ENCODE measurements at regions of chr6 and their contacts with region 1.

Region 1: DNA sequence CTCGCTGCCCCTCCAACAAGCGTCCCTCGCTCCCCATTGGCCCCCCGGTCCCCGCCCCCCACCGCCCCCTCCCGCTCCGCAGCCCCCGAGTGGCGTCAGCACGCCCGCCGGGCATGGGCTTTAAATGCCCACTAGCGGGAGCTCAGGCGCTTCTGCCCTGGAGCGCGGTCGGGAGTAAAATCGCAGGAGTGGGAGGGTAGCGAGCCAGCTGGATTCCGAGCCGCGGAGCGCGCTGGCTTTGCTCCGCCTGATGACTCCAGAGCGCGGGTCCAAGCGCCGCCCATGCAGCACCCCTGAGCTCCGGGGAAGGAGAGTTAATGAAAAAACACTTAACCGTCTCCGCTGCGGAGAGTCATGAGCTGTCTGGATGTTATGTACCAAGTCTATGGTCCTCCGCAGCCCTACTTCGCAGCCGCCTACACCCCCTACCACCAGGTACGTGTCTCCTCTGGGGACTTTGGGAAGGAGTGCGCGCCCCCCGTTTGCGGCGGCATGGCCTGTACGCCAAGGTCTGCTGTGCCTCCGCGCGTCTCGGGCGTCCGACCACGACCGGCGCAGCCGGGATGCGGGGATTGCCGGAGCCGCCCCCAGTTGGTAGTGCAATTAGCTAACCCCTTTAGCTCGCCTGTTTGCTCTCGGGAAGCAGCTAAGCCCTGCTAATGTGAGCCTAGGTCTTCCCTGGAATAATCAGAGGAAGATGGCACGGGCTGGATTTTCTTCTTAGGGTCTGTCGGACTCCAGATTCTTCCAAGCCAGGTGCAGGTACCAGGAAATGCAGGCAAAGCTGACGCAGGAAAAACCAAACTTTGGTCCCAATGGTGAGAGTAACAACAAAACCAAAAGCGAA is at the start of gene VGLL2:
- DNase-seq: peak; percentile 79 to 94
- ATAC-seq: peak; percentile 85 to 92 (median 88)
- H3K4me3 ChIP-seq: peak within 1 kb of the TSS; percentile 90
- H3K27ac ChIP-seq: peak within 1 kb of the TSS; percentile 95
- H3K4me1 ChIP-seq: peaks cover 23% of the 10 kb centered on the region
- H3K27me3 ChIP-seq: peaks cover 0 to 7% (median 3%) of the 10 kb centered on the region in 3 donors
- CTCF ChIP-seq: peak; percentile 41
- total RNA-seq, gene VGLL2: 60.2 to 108 (median 83.4) TPM

Region 2: GRCh38 chr6:116894669-116895068 is 371.0 kb before region 1 on chr6:
- intact Hi-C with region 1: no loop called
- DNase-seq: no peak
- ATAC-seq: no peak
- H3K4me3 ChIP-seq: no peak overlapping the region
- H3K27ac ChIP-seq: no peak overlapping the region
- H3K4me1 ChIP-seq: no peaks in the 10 kb centered on the region
- H3K27me3 ChIP-seq: peaks cover 0 to 3% (median 0%) of the 10 kb centered on the region in 3 donors
- CTCF ChIP-seq: no peak

Region 3: DNA sequence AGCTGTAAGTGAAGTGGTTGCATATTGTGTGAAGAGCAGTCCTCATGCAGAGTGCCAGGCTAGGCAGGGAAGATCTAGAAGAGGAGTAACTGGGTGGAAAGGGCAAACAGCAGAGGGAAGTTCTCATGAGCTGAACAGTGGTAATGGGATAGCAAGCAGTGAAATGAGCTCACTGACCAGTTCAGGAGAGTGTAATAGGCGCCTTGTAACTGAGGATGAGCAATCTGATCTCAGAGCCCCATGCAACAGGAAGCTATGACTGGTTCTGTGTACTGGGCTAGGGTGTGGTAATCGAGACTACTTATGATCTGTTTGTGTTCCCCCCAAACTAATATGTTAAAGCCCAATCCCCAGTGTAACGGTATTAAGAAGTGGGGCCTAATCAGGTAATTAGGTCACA is 290.0 kb before region 1 on chr6:
- intact Hi-C with region 1: loop called (anchors 2 to 5 kb)
- DNase-seq: no peak
- ATAC-seq: peak; percentile 90 to 95 (median 92)
- H3K4me3 ChIP-seq: no peak overlapping the region
- H3K27ac ChIP-seq: peak overlapping the region; percentile 86
- H3K4me1 ChIP-seq: peaks cover 30% of the 10 kb centered on the region
- H3K27me3 ChIP-seq: no peaks in the 10 kb centered on the region
- CTCF ChIP-seq: no peak

Region 4: DNA sequence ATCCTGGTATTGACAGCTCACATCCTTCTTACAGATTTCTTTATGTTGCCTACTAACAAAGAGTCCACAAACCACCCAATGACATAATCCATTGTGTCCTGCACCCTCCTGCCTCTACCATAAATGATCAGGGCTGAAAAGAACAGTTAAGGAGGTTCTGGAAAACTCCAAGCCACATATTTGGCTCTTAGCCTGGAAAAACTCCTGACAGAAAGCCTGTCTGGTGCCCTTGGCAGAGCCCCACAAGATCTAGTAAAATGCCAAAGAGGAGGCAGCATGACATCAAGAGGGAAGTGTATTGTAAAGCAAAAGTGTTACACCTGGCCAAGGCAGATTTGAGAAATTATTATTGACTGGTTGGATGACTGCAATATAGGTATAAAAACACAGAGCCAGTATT is 126.7 kb before region 1 on chr6:
- intact Hi-C with region 1: loop called in 1 of 2 experiments (anchors 5 kb)
- DNase-seq: no peak
- ATAC-seq: peak; percentile 37 to 64 (median 58)
- H3K4me3 ChIP-seq: no peak overlapping the region
- H3K27ac ChIP-seq: peak overlapping the region; percentile 89
- H3K4me1 ChIP-seq: peaks cover 22% of the 10 kb centered on the region
- H3K27me3 ChIP-seq: no peaks in the 10 kb centered on the region
- CTCF ChIP-seq: no peak

Region 5: GRCh38 chr6:117200067-117200466 is 65.6 kb before region 1 on chr6:
- intact Hi-C with region 1: loop called in 1 of 2 experiments (anchors 2 kb)
- DNase-seq: peak in 1 of 2 donors; percentile 67
- ATAC-seq: peak; percentile 65 to 88 (median 82)
- H3K4me3 ChIP-seq: no peak overlapping the region
- H3K27ac ChIP-seq: peak overlapping the region; percentile 61
- H3K4me1 ChIP-seq: peaks cover 17% of the 10 kb centered on the region
- H3K27me3 ChIP-seq: no peaks in the 10 kb centered on the region
- CTCF ChIP-seq: no peak

Region 6: GRCh38 chr6:117304446-117304845 is 38.8 kb after region 1 on chr6:
- intact Hi-C with region 1: loop called in 1 of 2 experiments (anchors 5 kb)
- DNase-seq: no peak
- ATAC-seq: no peak
- H3K4me3 ChIP-seq: no peak overlapping the region
- H3K27ac ChIP-seq: peak overlapping the region; percentile 88
- H3K4me1 ChIP-seq: peaks cover 37% of the 10 kb centered on the region
- H3K27me3 ChIP-seq: no peaks in the 10 kb centered on the region
- CTCF ChIP-seq: no peak

Region 7: GRCh38 chr6:117311726-117312125 is 46.1 kb after region 1 on chr6:
- intact Hi-C with region 1: loop called in 1 of 2 experiments (anchors 2 kb)
- DNase-seq: no peak
- ATAC-seq: no peak
- H3K4me3 ChIP-seq: no peak overlapping the region
- H3K27ac ChIP-seq: no peak overlapping the region
- H3K4me1 ChIP-seq: peaks cover 13% of the 10 kb centered on the region
- H3K27me3 ChIP-seq: no peaks in the 10 kb centered on the region
- CTCF ChIP-seq: no peak

Region 8: DNA sequence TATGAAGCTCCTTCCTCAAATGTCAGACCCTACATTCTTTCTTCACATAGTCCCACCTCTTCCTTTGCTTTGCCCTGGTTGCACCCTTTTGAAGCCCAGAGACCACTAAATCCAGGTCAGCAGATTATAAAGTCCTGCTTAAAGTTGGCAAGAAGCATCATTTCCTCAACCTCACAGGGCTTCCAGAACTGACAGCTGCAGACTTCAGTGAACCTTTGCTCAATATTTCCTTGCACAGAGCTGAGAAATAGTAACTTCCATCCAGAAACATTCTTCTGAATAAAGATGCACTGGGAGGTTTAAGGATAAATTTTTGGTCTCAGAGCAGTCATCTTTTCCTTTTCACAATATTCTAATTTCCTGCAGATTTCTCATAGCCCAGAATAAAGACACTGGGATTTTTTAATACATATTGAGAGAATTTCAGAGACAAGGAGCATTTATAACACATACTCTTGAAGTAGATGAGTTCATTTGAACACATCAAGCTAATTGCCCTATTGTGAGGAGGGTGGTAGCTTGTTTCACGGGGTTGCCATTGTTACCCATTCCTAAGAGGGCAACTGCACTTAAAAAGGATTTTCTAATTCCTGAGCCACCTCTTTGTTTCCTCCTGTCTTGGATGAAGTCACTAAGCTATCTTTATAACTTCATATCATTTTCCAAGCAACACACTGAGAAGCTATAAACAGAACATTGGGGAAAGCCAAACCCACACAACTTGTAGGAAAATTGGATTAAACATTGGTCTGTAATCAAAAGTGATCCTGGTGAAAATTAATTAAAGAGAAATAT is 1132.2 kb after region 1 on chr6:
- intact Hi-C with region 1: no loop called
- DNase-seq: no peak
- ATAC-seq: peak; percentile 70 to 94 (median 86)
- H3K4me3 ChIP-seq: peak overlapping the region; percentile 29
- H3K27ac ChIP-seq: peak overlapping the region; percentile 89
- H3K4me1 ChIP-seq: peaks cover 31% of the 10 kb centered on the region
- H3K27me3 ChIP-seq: no peaks in the 10 kb centered on the region
- CTCF ChIP-seq: no peak

Measured in psoas muscle (tissue), 8 donors.